AG04449 (cell line): ENCODE measurements at regions of chr14 and their contacts with region 1.

Region 1: DNA sequence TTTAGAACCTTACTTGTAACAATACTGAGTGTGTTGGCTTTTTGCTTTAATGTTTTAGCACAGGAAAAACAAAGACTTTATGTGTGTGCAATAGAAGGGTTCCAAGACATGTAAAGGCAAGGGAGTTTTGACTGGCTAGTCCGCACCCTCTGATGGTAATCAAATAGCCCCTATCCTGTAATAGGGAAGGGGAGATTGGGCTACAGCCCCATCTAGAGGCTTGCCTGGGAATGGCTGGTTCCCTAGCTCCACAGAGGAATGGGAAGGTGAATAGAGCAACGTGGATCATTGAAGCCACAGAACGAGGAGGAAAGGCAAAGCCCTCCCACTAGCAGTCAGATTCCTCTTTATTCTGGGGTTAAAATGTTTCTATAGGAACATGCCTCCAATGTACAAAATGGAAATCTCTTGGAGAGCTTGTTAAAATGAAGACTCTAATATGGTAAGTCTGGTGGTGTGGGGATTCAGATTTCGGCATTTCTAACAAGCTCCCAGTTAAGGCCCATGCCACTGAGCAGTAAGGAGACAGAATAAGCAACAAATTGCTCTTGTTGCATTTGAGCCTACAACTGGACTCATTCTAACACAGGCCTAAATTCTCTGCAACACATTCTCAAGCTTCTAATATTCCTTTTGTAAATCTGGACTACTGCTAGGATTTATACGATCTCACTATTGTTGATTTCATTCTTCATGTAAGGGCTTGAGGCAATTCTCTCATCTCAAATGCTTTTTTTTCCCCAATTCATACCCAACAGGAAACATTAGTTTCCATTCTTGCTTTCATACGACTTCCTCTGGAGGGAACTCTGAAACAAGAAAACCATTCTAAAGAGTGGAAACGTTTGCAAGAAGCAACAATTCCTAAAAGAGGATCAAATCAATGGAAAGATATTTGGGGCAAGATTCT is 57.1 kb downstream of the NIN start:
- DNase-seq: no peak
- H3K4me3 ChIP-seq: no peak overlapping the region
- CTCF ChIP-seq: peak; percentile 84

Region 2: GRCh38 chr14:50599700-50600444 is 174.0 kb before region 1 on chr14:
- CTCF ChIA-PET with region 1: interaction called, 187 read pairs
- POLR2A ChIA-PET with region 1: no interaction called
- DNase-seq: no peak
- H3K4me3 ChIP-seq: no peak overlapping the region
- CTCF ChIP-seq: peak; percentile 45

Region 3: GRCh38 chr14:50631408-50631821 is 142.5 kb before region 1 on chr14:
- CTCF ChIA-PET with region 1: interaction called, 14 read pairs
- POLR2A ChIA-PET with region 1: no interaction called
- DNase-seq: no peak
- H3K4me3 ChIP-seq: no peak overlapping the region
- CTCF ChIP-seq: no peak

Region 4: DNA sequence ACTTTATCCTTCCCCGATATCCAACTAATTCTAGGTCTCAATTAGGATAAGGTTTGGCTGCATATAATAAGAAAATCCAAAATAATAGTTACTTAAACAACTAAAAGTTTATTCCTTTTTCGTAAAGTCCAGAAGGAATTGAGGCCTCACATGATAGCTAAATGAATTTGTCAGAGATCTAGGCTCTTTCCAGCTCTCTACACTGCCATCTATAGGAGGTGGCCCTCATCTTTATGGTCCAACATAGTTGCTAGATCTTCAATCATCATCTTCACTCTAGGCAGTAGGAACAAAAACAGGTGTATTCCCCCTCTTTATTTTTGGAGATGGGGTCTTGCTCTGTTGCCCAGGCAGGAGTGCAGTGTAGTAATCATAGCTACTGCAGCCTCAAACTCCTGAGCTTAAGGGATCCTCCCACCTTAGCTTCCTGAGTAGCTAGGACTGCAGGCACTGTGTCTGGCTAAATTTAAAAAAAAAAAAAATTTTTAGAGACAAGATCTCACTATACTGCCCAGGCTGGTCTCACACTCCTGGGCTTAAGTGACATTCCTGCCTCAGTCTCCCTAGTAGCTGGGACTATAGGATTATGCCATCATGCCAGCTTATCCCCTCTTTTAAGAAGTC is 59.3 kb before region 1 on chr14:
- CTCF ChIA-PET with region 1: interaction called, 17 read pairs
- POLR2A ChIA-PET with region 1: no interaction called
- DNase-seq: no peak
- H3K4me3 ChIP-seq: no peak overlapping the region
- CTCF ChIP-seq: peak; percentile 63

Region 5: GRCh38 chr14:50823051-50823761 is 49.3 kb after region 1 on chr14:
- CTCF ChIA-PET with region 1: interaction called, 18 read pairs
- POLR2A ChIA-PET with region 1: no interaction called
- DNase-seq: no peak
- H3K4me3 ChIP-seq: no peak overlapping the region
- CTCF ChIP-seq: no peak